ENCODE measurements at regions of chr2 and their contacts with region 1.

Region 1: GRCh38 chr2:65432227-65433190 is at the start of gene SPRED2:
- DNase-seq: peak; percentile 94 to 97
- ATAC-seq: peak; percentile 53 to 82 (median 74)
- H3K4me3 ChIP-seq: peak within 1 kb of the TSS; percentile 85 to 98 (median 95)
- H3K27ac ChIP-seq: peak within 1 kb of the TSS; percentile 82 to 98 (median 92)
- H3K4me1 ChIP-seq: peaks cover 0 to 58% (median 37%) of the 10 kb centered on the region in 9 donors
- H3K27me3 ChIP-seq: no peaks in the 10 kb centered on the region
- CTCF ChIP-seq: peak in 3 of 9 donors; percentile 13 to 32 (median 18)
- total RNA-seq, gene SPRED2: 13.5 to 20.7 (median 17.2) TPM

Region 2: DNA sequence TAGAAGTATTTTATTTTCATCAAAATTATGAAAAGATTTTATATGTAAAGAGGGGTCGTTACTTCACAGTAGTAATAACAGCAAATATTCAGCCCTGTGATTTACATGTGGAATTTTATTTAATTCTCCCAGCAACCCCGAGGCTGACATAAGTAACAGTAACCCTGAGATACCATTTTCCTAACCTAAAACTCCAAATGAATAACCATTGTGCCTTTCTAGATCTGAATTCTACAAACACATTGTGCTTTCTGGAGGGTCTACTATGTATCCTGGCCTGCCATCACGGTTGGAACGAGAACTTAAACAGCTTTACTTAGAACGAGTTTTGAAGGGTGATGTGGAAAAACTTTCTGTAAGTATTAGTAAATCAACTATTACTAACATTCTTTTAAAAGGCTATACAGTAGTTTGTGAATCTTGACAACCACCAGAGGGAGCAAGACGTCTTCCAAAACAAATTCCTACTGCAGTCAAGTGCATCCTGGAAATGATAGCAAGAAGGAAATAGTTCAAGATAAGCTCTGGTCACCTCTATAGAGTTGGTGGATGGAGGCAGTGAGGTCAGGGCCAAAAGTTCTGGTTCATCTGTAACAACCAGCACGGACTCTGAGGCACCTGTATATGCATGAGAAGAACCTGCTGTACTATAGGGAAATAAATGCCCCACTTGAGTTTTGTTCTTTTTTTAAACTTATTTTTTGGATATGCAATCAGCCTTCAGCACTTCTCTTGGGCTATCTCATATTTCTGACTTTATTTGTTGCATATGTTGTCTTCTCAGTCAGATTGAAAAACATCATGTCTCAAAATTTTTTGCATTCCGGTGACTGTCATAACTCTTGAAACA is 167.5 kb before region 1 on chr2:
- intact Hi-C with region 1: loop called in 8 of 10 experiments (anchors 5 to 10 kb)
- DNase-seq: peak in 1 of 2 donors; percentile 66
- ATAC-seq: peak in 7 of 8 donors; percentile 72 to 87 (median 82)
- H3K4me3 ChIP-seq: no peak overlapping the region
- H3K27ac ChIP-seq: no peak overlapping the region
- H3K4me1 ChIP-seq: peaks cover 0 to 16% (median 7%) of the 10 kb centered on the region in 9 donors
- H3K27me3 ChIP-seq: no peaks in the 10 kb centered on the region
- CTCF ChIP-seq: peak; percentile 56 to 84 (median 74)

Region 3: GRCh38 chr2:65300761-65301711 is 131.5 kb before region 1 on chr2:
- intact Hi-C with region 1: loop called in 1 of 10 experiments (anchors 10 kb)
- DNase-seq: peak in 1 of 2 donors; percentile 38
- ATAC-seq: peak; percentile 6 to 69 (median 61)
- H3K4me3 ChIP-seq: peak overlapping the region in 4 of 10 donors; percentile 4 to 13 (median 6)
- H3K27ac ChIP-seq: peak overlapping the region; percentile 19 to 70 (median 58)
- H3K4me1 ChIP-seq: peaks cover 15 to 40% (median 35%) of the 10 kb centered on the region in 9 donors
- H3K27me3 ChIP-seq: no peaks in the 10 kb centered on the region
- CTCF ChIP-seq: no peak

Region 4: GRCh38 chr2:65316072-65316471 is 116.4 kb before region 1 on chr2:
- intact Hi-C with region 1: loop called in 4 of 10 experiments (anchors 2 to 10 kb)
- DNase-seq: peak in 1 of 2 donors; percentile 50
- ATAC-seq: peak in 7 of 8 donors; percentile 38 to 88 (median 73)
- H3K4me3 ChIP-seq: no peak overlapping the region
- H3K27ac ChIP-seq: peak overlapping the region in 8 of 10 donors; percentile 4 to 51 (median 22)
- H3K4me1 ChIP-seq: peaks cover 0 to 39% (median 12%) of the 10 kb centered on the region in 9 donors
- H3K27me3 ChIP-seq: no peaks in the 10 kb centered on the region
- CTCF ChIP-seq: no peak

Region 5: DNA sequence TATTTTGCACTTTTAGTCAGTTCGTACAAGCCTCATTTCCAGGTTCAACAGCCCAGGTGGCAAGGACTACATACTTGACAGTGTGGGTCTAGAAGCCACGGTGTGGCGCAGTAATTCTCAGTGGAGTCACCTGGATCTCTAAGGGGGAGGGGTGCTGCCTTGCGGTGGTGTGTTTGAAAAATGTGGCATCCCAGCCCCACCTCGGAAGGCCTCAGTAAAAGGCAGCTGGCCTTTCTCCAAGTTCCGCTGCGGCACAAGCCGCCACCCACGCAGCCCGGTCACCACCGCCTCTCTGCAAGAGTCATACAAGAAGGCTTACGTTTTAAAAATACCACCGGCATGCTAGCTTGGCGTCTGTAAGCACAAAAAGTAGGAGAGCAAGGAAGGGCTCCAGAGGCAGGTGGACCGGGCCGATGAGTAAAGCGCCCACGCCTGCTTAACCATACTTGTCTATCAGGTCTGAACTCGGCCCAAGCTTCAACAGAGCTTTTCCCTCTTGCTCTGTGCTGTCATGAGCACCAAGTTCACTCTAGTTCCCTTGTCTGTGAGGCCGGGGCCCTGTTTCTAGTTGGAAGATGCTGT is 49.6 kb before region 1 on chr2:
- intact Hi-C with region 1: loop called in 4 of 10 experiments (anchors 2 to 5 kb)
- DNase-seq: peak; percentile 75 to 83
- ATAC-seq: peak; percentile 36 to 86 (median 80)
- H3K4me3 ChIP-seq: peak overlapping the region in 7 of 10 donors; percentile 8 to 36 (median 29)
- H3K27ac ChIP-seq: peak overlapping the region; percentile 5 to 87 (median 70)
- H3K4me1 ChIP-seq: peaks cover 13 to 91% (median 69%) of the 10 kb centered on the region in 9 donors
- H3K27me3 ChIP-seq: no peaks in the 10 kb centered on the region
- CTCF ChIP-seq: peak in 3 of 9 donors; percentile 14 to 25 (median 22)

Region 6: DNA sequence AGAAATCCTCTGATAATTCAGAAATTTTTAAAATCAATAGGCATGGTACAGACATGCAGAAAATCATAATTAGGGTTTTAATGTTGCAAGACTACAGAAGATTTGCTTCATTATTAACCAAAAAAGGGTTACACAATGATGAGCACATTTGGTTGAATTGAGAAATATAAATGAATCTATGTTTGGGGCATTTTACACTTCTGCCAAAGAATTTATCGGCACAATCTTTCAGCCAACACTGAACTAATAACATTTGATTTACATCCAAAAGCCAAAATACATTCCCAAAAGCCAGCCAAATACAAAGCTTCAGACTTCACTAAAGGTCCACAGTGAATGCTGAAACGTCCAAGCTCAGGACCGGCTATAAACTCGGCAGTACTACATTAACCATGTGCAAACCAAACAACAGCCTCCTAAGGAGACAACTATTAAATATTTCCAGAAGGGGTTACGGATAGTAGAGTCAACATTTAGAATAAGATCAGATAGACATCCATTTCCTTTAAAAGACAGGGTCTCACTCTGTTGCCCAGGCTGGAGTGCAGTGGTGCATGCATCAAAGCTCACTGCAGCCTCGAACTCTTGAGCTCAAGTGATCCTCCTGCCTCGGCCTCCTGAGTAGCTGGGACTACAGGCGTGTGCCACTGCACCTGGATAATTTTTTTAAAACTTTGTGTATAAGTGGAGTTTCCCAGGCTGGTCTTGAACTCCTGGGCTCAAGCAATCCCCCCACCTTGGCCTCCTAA is 29.6 kb before region 1 on chr2:
- intact Hi-C with region 1: no loop called
- DNase-seq: no peak
- ATAC-seq: peak in 1 of 8 donors; percentile 45
- H3K4me3 ChIP-seq: no peak overlapping the region
- H3K27ac ChIP-seq: no peak overlapping the region
- H3K4me1 ChIP-seq: peaks cover 4 to 63% (median 27%) of the 10 kb centered on the region in 9 donors
- H3K27me3 ChIP-seq: no peaks in the 10 kb centered on the region
- CTCF ChIP-seq: no peak

Region 7: DNA sequence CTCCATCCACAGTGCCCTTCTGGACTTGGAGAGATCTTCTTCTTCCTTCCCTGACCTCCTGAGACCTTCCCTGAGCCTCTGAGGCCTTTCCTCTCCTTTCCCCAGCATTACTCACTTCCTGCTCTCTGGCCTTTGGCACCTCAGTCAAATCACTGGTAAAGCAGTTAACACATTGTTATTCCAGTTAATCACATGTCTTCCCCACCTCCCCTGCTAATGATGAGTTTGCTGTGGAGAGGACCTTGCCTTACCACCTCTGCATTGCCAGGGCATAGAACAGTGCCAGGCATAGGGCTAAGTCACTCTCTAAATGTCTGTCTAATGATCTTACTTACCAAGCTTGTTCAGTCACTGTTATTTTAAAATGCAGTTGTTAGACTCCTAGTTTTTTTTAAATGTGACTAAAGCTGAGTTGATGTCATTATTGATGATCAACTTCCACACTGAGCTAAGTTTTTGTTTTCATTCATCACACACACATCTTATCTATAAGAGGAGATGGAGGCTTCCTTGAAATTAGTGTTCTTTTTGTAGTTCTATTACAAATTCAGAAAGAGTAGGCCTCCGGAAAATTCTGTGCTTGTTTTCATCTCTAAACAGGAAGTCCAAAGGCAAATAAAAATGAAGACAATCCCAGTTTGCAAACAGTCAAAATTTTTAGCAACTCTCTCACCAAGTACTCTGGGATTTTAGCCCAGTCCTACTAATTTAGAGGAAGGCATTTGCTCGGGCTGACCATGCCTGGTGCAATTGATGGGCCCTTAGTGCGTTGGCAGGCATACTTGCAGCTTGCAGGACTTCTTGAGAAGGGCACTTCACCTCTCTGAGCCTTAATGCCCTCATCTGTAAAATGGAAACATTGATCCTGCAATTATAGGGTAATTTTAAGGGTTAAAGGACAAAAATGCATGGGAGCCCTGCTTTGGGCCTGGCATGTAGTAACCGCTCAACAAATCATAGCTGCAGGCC is 113.6 kb after region 1 on chr2:
- intact Hi-C with region 1: loop called in 9 of 10 experiments (anchors 2 to 10 kb)
- DNase-seq: peak in 1 of 2 donors; percentile 42
- ATAC-seq: peak; percentile 65 to 91 (median 85)
- H3K4me3 ChIP-seq: no peak overlapping the region
- H3K27ac ChIP-seq: peak overlapping the region in 9 of 10 donors; percentile 31 to 81 (median 65)
- H3K4me1 ChIP-seq: peaks cover 0 to 24% (median 16%) of the 10 kb centered on the region in 9 donors
- H3K27me3 ChIP-seq: no peaks in the 10 kb centered on the region
- CTCF ChIP-seq: no peak

Measured in heart right ventricle (tissue), 16 donors.